ENCODE measurements at regions of chr10 and their contacts with region 1.

Region 1: GRCh38 chr10:112446855-112447711 is at the starts of genes VTI1A and ZDHHC6:
- DNase-seq: peak; percentile 91
- ATAC-seq: peak; percentile 92
- H3K4me3 Mint-ChIP-seq: peak within 1 kb of the TSS; percentile 93
- H3K27ac Mint-ChIP-seq: peak within 1 kb of the TSS; percentile 94
- H3K4me1 Mint-ChIP-seq: peaks cover 52% of the 10 kb centered on the region
- H3K27me3 Mint-ChIP-seq: no peaks in the 10 kb centered on the region
- total RNA-seq, gene VTI1A: 39.0 to 54.6 TPM
- total RNA-seq, gene ZDHHC6: 44.2 to 48.1 TPM

Region 2: DNA sequence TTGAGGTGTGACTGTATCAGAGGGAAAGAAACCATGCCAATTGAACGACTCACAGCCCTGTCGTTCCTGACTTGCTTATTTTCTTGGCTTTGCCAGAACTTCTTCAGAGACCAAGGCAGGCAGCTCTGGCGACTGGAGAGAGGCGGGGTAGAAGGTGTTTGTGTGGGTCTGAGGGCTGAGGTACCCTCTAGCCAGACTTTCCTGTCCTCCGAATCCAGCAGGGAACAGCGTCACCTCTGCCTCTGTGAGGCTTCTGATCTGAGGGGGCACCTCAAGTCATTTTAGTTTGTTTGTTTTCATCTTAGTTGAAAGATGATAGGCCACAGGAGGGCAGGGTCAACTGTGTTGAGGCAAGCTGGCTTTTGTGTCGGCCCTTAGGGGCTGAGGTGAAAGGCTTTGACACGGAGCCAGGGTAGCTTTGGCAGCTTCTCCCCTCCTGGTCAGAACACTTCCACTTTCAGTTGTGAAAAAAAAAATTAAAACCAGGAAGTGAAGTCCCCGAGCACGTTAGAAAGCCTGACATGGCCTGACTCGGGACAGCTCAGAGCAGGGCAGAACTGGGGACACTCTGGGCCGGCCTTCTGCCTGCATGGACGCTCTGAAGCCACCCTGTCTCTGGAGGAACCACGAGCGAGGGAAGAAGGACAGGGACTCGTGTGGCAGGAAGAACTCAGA is 71.2 kb before region 1 on chr10:
- CTCF ChIA-PET with region 1: interaction called, 12 read pairs
- DNase-seq: peak; percentile 72
- ATAC-seq: peak; percentile 91
- H3K4me3 Mint-ChIP-seq: peak overlapping the region; percentile 96
- H3K27ac Mint-ChIP-seq: peak overlapping the region; percentile 100
- H3K4me1 Mint-ChIP-seq: peaks cover 62% of the 10 kb centered on the region
- H3K27me3 Mint-ChIP-seq: no peaks in the 10 kb centered on the region

Region 3: GRCh38 chr10:112461029-112461887 is 14.2 kb after region 1 on chr10:
- CTCF ChIA-PET with region 1: interaction called, 10 read pairs
- DNase-seq: peak; percentile 54
- ATAC-seq: peak; percentile 42
- H3K4me3 Mint-ChIP-seq: no peak overlapping the region
- H3K27ac Mint-ChIP-seq: peak overlapping the region; percentile 52
- H3K4me1 Mint-ChIP-seq: peaks cover 10% of the 10 kb centered on the region
- H3K27me3 Mint-ChIP-seq: no peaks in the 10 kb centered on the region

Region 4: GRCh38 chr10:112701211-112701877 is 254.3 kb after region 1 on chr10:
- CTCF ChIA-PET with region 1: no interaction called
- DNase-seq: no peak
- ATAC-seq: no peak
- H3K4me3 Mint-ChIP-seq: no peak overlapping the region
- H3K27ac Mint-ChIP-seq: no peak overlapping the region
- H3K4me1 Mint-ChIP-seq: no peaks in the 10 kb centered on the region
- H3K27me3 Mint-ChIP-seq: no peaks in the 10 kb centered on the region